ENCODE measurements at regions of chr14 and their contacts with region 1.

Region 1: GRCh38 chr14:69398053-69398817 is at the starts of genes ERH and SLC39A9:
- DNase-seq: peak; percentile 98
- ATAC-seq: peak; percentile 86
- H3K4me3 ChIP-seq: peak within 1 kb of the TSS; percentile 91
- H3K27ac ChIP-seq: peak within 1 kb of the TSS; percentile 84
- H3K4me1 ChIP-seq: peaks cover 34% of the 10 kb centered on the region
- H3K27me3 ChIP-seq: no peaks in the 10 kb centered on the region
- CTCF ChIP-seq: no peak
- total RNA-seq, gene ERH: 128 and 132 TPM in 2 replicates
- total RNA-seq, gene SLC39A9: 74.9 and 80.8 TPM in 2 replicates

Region 2: GRCh38 chr14:69153131-69153872 is 244.9 kb before region 1 on chr14:
- CTCF ChIA-PET with region 1: no interaction called
- POLR2A ChIA-PET with region 1: no interaction called
- intact Hi-C with region 1: loop called (anchors 1 kb)
- DNase-seq: peak; percentile 91
- ATAC-seq: peak; percentile 82
- H3K4me3 ChIP-seq: peak overlapping the region; percentile 94
- H3K27ac ChIP-seq: no peak overlapping the region
- H3K4me1 ChIP-seq: peaks cover 43% of the 10 kb centered on the region
- H3K27me3 ChIP-seq: no peaks in the 10 kb centered on the region
- CTCF ChIP-seq: no peak

Region 3: DNA sequence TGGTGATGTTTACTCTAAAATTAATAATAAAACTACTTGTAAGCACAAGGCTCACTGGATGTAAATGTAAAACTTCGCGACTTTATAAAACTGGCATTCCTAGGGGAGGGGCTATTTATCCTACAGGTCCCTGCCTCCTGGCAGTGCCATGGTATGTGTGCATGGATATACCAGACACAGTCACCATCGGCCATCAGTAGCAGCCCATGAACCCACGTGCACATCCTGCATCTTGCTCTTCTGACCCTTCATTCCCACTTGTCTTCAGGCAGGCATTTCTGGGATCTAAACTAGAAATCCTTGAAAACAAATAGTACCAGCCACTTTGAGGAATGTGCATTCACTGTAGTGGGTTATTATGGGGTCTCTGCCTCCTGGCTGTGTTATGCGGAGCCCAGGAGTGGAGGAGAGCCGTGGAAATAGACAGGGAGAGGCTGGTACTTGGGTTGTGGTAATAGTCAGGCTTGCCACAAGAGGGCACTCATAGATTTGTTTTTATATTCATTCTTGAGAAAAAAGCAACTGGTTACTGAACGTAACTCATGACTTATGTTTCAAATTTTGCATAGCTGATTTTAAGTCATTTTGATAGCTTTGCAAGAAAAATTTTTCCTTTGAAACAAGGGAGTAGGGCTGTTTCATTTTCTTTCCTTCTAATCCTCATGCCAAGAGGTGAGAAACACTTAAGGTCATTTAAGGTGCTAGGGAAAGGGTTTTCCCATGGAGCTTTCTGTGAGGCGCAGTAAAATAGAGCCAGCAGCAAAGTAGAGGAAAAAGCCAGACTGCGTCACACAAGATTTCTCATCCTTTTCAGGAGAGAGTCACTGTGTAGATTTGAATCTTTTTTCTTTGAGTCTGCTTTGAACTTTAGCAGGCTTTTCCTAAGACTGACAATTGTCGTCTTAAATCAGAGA is 155.7 kb before region 1 on chr14:
- CTCF ChIA-PET with region 1: no interaction called
- POLR2A ChIA-PET with region 1: no interaction called
- intact Hi-C with region 1: loop called (anchors 2 kb)
- DNase-seq: peak; percentile 79
- ATAC-seq: peak; percentile 89
- H3K4me3 ChIP-seq: no peak overlapping the region
- H3K27ac ChIP-seq: no peak overlapping the region
- H3K4me1 ChIP-seq: no peaks in the 10 kb centered on the region
- H3K27me3 ChIP-seq: no peaks in the 10 kb centered on the region
- CTCF ChIP-seq: peak; percentile 93

Region 4: DNA sequence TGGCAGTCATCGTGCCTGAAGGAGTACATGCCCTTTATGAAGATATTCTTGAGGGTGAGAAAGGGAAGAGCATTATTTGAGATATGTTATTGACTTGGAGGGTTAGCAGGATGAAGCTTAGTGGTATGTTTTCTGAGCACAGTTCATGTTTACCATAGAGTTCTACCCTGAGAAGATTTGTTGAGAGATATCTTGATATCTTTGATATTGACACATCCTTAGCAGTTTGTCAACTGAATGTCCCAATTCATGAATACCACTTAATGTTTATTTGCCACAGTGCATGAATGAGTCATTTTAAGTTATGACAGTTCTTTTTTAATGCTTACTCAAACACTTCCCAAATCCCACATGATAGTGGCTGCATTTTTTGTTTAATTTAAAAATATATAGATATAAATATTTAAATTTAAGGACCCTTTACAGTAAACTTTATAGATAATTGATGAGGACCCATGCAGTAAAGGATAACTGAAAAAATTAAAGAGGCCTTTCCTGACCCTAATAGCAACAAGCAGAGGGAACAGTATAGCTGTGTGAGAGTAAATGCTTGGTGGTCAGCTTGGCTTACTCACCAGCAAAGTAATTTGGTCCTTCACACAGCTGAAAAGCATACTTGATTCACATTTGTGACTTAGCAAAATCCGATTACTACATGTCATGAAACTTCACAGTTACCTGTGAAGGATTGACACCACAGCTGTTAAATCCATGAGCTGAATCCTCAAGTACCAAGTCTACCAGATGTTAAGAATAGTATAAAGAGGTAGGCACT is 26.1 kb after region 1 on chr14:
- CTCF ChIA-PET with region 1: no interaction called
- POLR2A ChIA-PET with region 1: interaction called, 8 read pairs
- intact Hi-C with region 1: loop called (anchors 2 kb)
- DNase-seq: peak; percentile 64
- ATAC-seq: peak; percentile 90
- H3K4me3 ChIP-seq: no peak overlapping the region
- H3K27ac ChIP-seq: peak overlapping the region; percentile 76
- H3K4me1 ChIP-seq: peaks cover 18% of the 10 kb centered on the region
- H3K27me3 ChIP-seq: no peaks in the 10 kb centered on the region
- CTCF ChIP-seq: no peak

Region 5: GRCh38 chr14:69574263-69574953 is 176.2 kb after region 1 on chr14 and contains the start of gene CCDC177:
- CTCF ChIA-PET with region 1: no interaction called
- POLR2A ChIA-PET with region 1: no interaction called
- intact Hi-C with region 1: loop called (anchors 5 kb)
- DNase-seq: peak; percentile 79
- ATAC-seq: peak; percentile 86
- H3K4me3 ChIP-seq: peak within 1 kb of the TSS; percentile 73
- H3K27ac ChIP-seq: no peak within 1 kb of the TSS
- H3K4me1 ChIP-seq: peaks cover 9% of the 10 kb centered on the region
- H3K27me3 ChIP-seq: peaks cover 55% of the 10 kb centered on the region
- CTCF ChIP-seq: peak; percentile 93
- total RNA-seq, gene CCDC177: not detected in 2 replicates

Measured in PC-3 (cell line).